ENCODE measurements at regions of chr22 and their contacts with region 1.

Region 1: GRCh38 chr22:38740754-38741153 is 15.0 kb downstream of the SUN2 start:
- DNase-seq: no peak
- H3K4me3 ChIP-seq: no peak overlapping the region
- H3K27ac ChIP-seq: no peak overlapping the region
- H3K4me1 ChIP-seq: peaks cover 3% of the 10 kb centered on the region
- H3K27me3 ChIP-seq: no peaks in the 10 kb centered on the region
- CTCF ChIP-seq: no peak
- EP300 ChIP-seq: no peak
- POLR2A ChIP-seq: no peak

Region 2: DNA sequence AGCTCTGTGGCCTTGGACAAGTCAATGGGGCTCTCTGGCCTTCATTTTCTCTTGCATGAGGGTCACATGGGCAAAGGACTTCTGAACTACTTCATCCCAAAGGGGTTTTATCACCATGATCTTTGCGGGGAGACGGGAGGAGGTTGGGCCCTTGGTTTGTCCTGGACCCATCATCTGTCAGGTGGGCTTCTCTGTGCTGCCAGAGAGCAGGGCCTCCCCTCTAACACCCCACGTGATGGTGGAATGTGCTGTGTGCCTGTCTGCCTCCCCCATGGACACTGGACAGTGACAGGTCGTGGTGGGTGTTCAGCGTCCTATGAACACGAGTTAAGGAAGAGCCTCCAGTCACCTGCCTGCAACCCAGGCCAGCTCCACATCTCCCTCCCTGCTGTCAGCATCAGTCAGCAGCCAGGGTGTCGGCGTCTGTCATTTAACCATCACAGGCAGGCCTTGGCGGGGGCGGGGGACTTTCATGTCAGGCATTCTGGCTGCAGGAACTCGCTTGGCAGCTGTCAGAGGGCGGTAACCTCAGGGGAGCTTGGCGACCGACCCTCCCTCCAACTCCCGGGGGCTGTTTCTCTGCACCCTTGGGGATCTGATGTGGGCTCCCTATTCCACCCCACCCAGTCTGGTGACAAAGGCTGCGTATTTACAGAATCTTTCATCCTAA is 17.7 kb after region 1 on chr22:
- intact Hi-C with region 1: loop called in 1 of 4 experiments (anchors 2 kb)
- DNase-seq: no peak
- H3K4me3 ChIP-seq: no peak overlapping the region
- H3K27ac ChIP-seq: no peak overlapping the region
- H3K4me1 ChIP-seq: no peaks in the 10 kb centered on the region
- H3K27me3 ChIP-seq: no peaks in the 10 kb centered on the region
- CTCF ChIP-seq: no peak
- EP300 ChIP-seq: no peak
- POLR2A ChIP-seq: no peak

Measured in ovary (tissue), 10 donors.